ENCODE measurements at regions of chr18 and their contacts with region 1.

Region 1: DNA sequence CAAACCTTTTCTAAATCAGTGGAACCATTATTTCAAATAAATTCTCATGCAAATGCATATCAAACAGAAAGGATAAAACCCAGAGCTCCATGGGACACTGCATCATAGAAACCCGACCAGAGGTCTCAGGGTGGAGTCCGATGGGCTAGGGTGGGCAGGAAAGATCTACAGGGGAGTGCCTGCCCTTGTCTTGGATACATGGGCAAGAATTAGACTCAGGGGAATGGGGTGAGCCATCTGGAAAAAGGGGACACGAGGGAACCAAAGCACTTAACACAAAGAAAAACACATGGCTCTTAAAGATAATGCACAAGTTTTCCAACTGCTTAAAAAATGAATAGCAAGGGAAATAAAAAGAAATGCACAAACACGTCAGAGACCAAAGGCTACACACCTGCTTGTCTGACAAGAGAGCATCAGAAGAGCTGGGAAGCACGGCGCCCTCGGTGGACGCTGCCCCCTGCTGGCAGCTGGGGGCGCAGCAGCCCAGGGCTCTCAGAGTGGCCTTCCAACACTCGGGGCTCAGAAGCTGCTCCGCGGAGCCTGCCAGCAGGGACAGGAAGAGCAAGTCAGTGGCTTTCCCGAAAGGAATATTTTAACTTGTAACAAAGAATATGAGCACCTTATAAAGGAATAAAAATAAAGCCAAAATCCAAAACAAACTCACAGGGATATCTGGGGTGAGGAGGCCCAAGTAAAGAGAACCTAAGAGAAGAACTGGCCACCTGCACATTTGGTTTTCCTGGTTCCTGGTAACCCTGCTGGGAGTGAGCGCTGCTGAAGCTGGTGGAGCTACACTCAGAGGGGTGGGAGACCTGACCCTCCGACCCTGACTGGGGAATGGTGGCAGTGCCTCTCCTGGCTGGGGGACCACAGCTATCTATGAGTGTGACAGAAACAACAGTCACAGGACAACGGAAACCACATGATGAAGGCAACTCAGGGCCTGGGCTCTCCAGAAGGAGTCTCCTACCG is 54.5 kb downstream of the SIGLEC15 start:
- DNase-seq: peak; percentile 64 to 74 (median 68)
- H3K4me3 ChIP-seq: no peak overlapping the region
- H3K4me3 Mint-ChIP-seq: peak overlapping the region in 1 of 8 donors; percentile 17
- H3K27ac ChIP-seq: no peak overlapping the region
- H3K27ac Mint-ChIP-seq: peak overlapping the region in 5 of 7 donors; percentile 30 to 82 (median 51)
- H3K4me1 ChIP-seq: peaks cover 16% of the 10 kb centered on the region
- H3K4me1 Mint-ChIP-seq: peaks cover 10 to 19% (median 16%) of the 10 kb centered on the region in 4 donors
- H3K27me3 ChIP-seq: no peaks in the 10 kb centered on the region
- H3K27me3 Mint-ChIP-seq: no peaks in the 10 kb centered on the region

Region 2: GRCh38 chr18:45670281-45670962 is 209.5 kb before region 1 on chr18:
- CTCF ChIA-PET with region 1: interaction called, 342 read pairs
- POLR2A ChIA-PET with region 1: interaction called, 39 read pairs
- intact Hi-C with region 1: loop called (anchors 1 kb)
- DNase-seq: peak; percentile 39 to 80 (median 42)
- H3K4me3 ChIP-seq: no peak overlapping the region
- H3K4me3 Mint-ChIP-seq: peak overlapping the region in 7 of 8 donors; percentile 37 to 84 (median 66)
- H3K27ac ChIP-seq: peak overlapping the region; percentile 35
- H3K27ac Mint-ChIP-seq: peak overlapping the region; percentile 62 to 92 (median 84)
- H3K4me1 ChIP-seq: peaks cover 57% of the 10 kb centered on the region
- H3K4me1 Mint-ChIP-seq: peaks cover 35 to 60% (median 51%) of the 10 kb centered on the region in 4 donors
- H3K27me3 ChIP-seq: no peaks in the 10 kb centered on the region
- H3K27me3 Mint-ChIP-seq: no peaks in the 10 kb centered on the region

Region 3: GRCh38 chr18:45722899-45723298 is 157.1 kb before region 1 on chr18:
- CTCF ChIA-PET with region 1: interaction called, 55 read pairs
- POLR2A ChIA-PET with region 1: no interaction called
- intact Hi-C with region 1: no loop called
- DNase-seq: peak; percentile 45 to 57 (median 53)
- H3K4me3 ChIP-seq: no peak overlapping the region
- H3K4me3 Mint-ChIP-seq: no peak overlapping the region
- H3K27ac ChIP-seq: no peak overlapping the region
- H3K27ac Mint-ChIP-seq: no peak overlapping the region
- H3K4me1 ChIP-seq: no peaks in the 10 kb centered on the region
- H3K4me1 Mint-ChIP-seq: peaks cover 0 to 8% (median 0%) of the 10 kb centered on the region in 4 donors
- H3K27me3 ChIP-seq: no peaks in the 10 kb centered on the region
- H3K27me3 Mint-ChIP-seq: no peaks in the 10 kb centered on the region

Region 4: GRCh38 chr18:45734944-45735343 is 145.0 kb before region 1 on chr18:
- CTCF ChIA-PET with region 1: no interaction called
- POLR2A ChIA-PET with region 1: no interaction called
- intact Hi-C with region 1: no loop called
- DNase-seq: no peak
- H3K4me3 ChIP-seq: no peak overlapping the region
- H3K4me3 Mint-ChIP-seq: no peak overlapping the region
- H3K27ac ChIP-seq: no peak overlapping the region
- H3K27ac Mint-ChIP-seq: no peak overlapping the region
- H3K4me1 ChIP-seq: no peaks in the 10 kb centered on the region
- H3K4me1 Mint-ChIP-seq: no peaks in the 10 kb centered on the region
- H3K27me3 ChIP-seq: no peaks in the 10 kb centered on the region
- H3K27me3 Mint-ChIP-seq: no peaks in the 10 kb centered on the region

Region 5: DNA sequence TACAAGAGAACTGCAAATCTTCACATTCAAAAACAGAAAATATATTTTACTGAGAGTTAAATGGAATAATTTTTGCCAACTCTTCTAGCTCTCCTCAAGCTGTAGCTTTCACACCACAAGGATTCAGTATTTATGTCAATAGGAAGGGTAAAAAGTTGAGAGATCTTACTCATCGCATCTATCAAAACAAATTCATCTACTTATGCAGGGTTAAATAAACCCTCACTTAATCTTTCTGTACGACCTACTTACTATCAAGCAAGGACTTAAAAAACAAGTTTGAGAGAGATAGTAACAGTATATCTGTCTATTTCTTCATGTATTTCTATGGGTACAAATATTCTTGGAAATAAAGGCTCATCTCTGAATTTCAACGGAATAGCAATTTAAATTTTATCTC is 19.0 kb before region 1 on chr18:
- CTCF ChIA-PET with region 1: interaction called, 18 read pairs
- POLR2A ChIA-PET with region 1: no interaction called
- intact Hi-C with region 1: no loop called
- DNase-seq: no peak
- H3K4me3 ChIP-seq: no peak overlapping the region
- H3K4me3 Mint-ChIP-seq: no peak overlapping the region
- H3K27ac ChIP-seq: no peak overlapping the region
- H3K27ac Mint-ChIP-seq: peak overlapping the region in 1 of 7 donors; percentile 59
- H3K4me1 ChIP-seq: no peaks in the 10 kb centered on the region
- H3K4me1 Mint-ChIP-seq: no peaks in the 10 kb centered on the region
- H3K27me3 ChIP-seq: no peaks in the 10 kb centered on the region
- H3K27me3 Mint-ChIP-seq: no peaks in the 10 kb centered on the region

Region 6: GRCh38 chr18:45890606-45891005 is 10.6 kb after region 1 on chr18:
- CTCF ChIA-PET with region 1: interaction called, 18 read pairs
- POLR2A ChIA-PET with region 1: no interaction called
- intact Hi-C with region 1: no loop called
- DNase-seq: no peak
- H3K4me3 ChIP-seq: no peak overlapping the region
- H3K4me3 Mint-ChIP-seq: no peak overlapping the region
- H3K27ac ChIP-seq: no peak overlapping the region
- H3K27ac Mint-ChIP-seq: peak overlapping the region in 2 of 7 donors; percentile 31 to 61
- H3K4me1 ChIP-seq: no peaks in the 10 kb centered on the region
- H3K4me1 Mint-ChIP-seq: peaks cover 0 to 7% (median 5%) of the 10 kb centered on the region in 4 donors
- H3K27me3 ChIP-seq: no peaks in the 10 kb centered on the region
- H3K27me3 Mint-ChIP-seq: no peaks in the 10 kb centered on the region

Measured in CD4-positive, alpha-beta memory T cell (primary cell).